Activated CD4-positive, alpha-beta T cell treated with anti-CD3 and anti-CD28 coated beads, Interleukin-2, amount 10 ng/mL, durations not matched to agents 24 days and 14 days (primary cell): ENCODE measurements at regions of chr2 and their contacts with region 1.

Region 1: GRCh38 chr2:108927936-108928659 is 60.9 kb downstream of the EDAR start:
- DNase-seq: peak; percentile 80
- H3K4me3 Mint-ChIP-seq: no peak overlapping the region
- H3K27ac Mint-ChIP-seq: peak overlapping the region; percentile 28
- H3K4me1 Mint-ChIP-seq: no peaks in the 10 kb centered on the region
- H3K27me3 Mint-ChIP-seq: peaks cover 1% of the 10 kb centered on the region

Region 2: GRCh38 chr2:108701208-108701607 is 226.9 kb before region 1 on chr2:
- intact Hi-C with region 1: no loop called
- DNase-seq: no peak
- H3K4me3 Mint-ChIP-seq: no peak overlapping the region
- H3K27ac Mint-ChIP-seq: no peak overlapping the region
- H3K4me1 Mint-ChIP-seq: peaks cover 2% of the 10 kb centered on the region
- H3K27me3 Mint-ChIP-seq: no peaks in the 10 kb centered on the region

Region 3: GRCh38 chr2:108988796-108989713 is 61.0 kb after region 1 on chr2 and contains the start of gene EDAR:
- intact Hi-C with region 1: loop called (anchors 1 kb)
- DNase-seq: peak; percentile 77
- H3K4me3 Mint-ChIP-seq: peak within 1 kb of the TSS; percentile 74
- H3K27ac Mint-ChIP-seq: peak within 1 kb of the TSS; percentile 31
- H3K4me1 Mint-ChIP-seq: peaks cover 23% of the 10 kb centered on the region
- H3K27me3 Mint-ChIP-seq: peaks cover 24% of the 10 kb centered on the region
- total RNA-seq, gene EDAR: 0.56 and 0.62 TPM in 2 replicates

Region 4: DNA sequence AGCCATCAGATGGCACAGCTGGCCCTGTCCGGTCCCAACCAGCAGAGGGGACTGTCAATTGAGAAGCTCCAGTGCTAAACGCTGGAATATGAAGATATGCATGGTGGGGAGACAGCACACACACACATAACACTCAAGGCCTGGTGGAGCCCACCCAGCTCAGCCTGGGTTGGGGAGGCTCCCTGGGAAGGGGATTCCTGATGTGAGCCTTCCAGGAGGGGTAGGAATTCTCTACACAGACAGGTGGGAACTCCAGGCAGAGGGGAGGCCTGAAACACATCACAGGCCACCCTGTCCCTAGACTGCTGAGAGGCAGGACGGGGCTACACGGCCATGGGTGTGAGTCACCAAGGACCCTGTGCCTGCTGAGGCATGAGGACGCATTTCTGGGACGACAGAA is 151.5 kb after region 1 on chr2:
- intact Hi-C with region 1: no loop called
- DNase-seq: no peak
- H3K4me3 Mint-ChIP-seq: no peak overlapping the region
- H3K27ac Mint-ChIP-seq: no peak overlapping the region
- H3K4me1 Mint-ChIP-seq: no peaks in the 10 kb centered on the region
- H3K27me3 Mint-ChIP-seq: peaks cover 13% of the 10 kb centered on the region

Region 5: DNA sequence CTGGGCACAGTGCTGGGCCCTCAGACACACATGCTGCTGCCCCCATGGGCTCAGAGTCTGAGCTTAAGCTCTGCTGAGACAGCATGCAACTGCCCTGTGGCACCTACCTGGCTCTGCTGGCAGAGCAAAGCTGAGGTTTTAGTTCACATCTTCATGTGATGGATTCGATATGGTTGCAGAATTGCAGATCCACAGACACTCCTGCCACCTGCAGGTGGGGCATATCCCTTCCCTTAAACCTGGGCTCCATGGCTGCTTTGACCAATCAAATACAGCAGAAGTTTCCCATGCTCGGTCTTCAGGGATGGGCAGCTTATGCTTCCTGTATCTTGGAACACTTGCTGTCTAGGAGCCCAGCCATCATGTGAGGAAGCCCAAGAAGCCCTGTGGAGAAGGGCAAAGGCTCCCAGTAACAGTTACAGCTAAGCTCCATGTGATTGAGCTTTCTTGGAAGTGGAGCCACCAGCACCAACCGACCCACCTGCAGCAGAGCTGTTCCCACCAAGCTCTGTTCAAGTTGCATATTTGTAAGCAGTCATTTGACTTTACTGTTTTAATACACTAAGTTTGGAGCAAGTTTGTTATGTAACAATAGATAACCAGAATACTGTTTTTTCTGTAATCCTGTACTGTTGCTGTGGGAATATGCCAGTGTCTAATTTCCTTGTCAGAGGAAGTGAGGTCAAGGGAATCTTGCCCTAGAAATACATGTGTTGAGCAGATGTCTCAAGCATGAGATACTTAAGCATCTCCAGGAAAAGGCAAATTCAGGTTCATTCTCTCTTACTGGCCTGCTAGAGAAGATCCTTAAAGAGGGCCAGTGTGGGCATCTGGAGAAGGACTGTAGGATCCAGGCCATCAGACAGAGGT is 280.2 kb after region 1 on chr2:
- intact Hi-C with region 1: loop called (anchors 1 kb)
- DNase-seq: no peak
- H3K4me3 Mint-ChIP-seq: no peak overlapping the region
- H3K27ac Mint-ChIP-seq: no peak overlapping the region
- H3K4me1 Mint-ChIP-seq: peaks cover 28% of the 10 kb centered on the region
- H3K27me3 Mint-ChIP-seq: peaks cover 70% of the 10 kb centered on the region